Aorta (tissue), 5 donors: ENCODE measurements at regions of chr3 and their contacts with region 1.

Region 1: GRCh38 chr3:130892759-130893375 is 1.0 kb upstream of the ATP2C1 start:
- DNase-seq: peak in 1 of 2 donors; percentile 68
- ATAC-seq: peak; percentile 90
- H3K4me3 ChIP-seq: peak overlapping the region; percentile 70 to 95
- H3K27ac ChIP-seq: peak overlapping the region; percentile 93
- H3K4me1 ChIP-seq: peaks cover 3 to 5% of the 10 kb centered on the region in 2 donors
- H3K27me3 ChIP-seq: no peaks in the 10 kb centered on the region

Region 2: DNA sequence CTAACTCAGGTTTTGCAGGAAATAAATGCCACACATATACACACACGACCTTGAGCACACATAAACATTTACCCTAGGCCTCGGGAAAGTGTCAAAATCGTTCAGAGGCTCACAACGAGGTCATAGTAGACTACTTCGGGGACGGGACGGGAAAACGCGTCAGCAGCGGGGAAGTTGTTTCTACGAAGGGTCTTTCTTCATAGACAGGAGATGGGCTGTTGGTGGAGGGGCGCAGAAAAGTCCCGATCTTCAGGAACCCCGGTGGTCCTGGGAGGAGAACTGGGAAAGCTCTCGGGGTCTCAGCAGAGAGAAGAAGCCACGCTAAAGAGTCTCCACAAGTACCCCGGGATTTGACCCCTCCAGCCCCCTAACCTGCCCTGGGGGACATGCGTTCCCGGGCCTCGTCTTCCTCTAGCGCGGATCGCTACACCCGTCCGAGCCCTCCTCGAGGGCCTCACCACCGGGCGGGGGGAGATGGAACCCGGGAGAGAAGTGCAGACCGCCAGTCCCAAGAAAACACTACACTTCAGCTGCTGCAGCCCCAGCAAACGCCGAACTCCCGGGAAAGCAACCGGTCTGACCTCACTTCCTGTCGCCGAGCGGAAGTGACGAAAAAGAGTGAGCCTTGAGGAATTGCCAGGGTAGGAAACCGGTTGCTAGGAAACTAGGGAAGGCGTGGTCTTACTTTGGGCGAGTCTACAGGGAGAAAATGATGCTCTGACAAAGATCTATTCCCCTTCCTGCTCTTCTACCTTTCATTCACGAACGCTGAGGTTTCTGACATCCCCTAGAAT is 146.4 kb before region 1 on chr3 and contains the start of gene PIK3R4:
- intact Hi-C with region 1: loop called in 1 of 2 experiments (anchors 5 kb)
- DNase-seq: peak; percentile 95 to 96
- ATAC-seq: peak; percentile 96
- H3K4me3 ChIP-seq: peak within 1 kb of the TSS; percentile 51 to 91
- H3K27ac ChIP-seq: peak within 1 kb of the TSS in 1 of 2 donors; percentile 75
- H3K4me1 ChIP-seq: peaks cover 6 to 8% of the 10 kb centered on the region in 2 donors
- H3K27me3 ChIP-seq: no peaks in the 10 kb centered on the region
- total RNA-seq, gene PIK3R4: 20.5 to 22.3 TPM

Region 3: GRCh38 chr3:130759699-130760338 is 133.0 kb before region 1 on chr3:
- intact Hi-C with region 1: loop called in 1 of 2 experiments (anchors 5 kb)
- DNase-seq: peak in 1 of 2 donors; percentile 53
- ATAC-seq: peak; percentile 69
- H3K4me3 ChIP-seq: no peak overlapping the region
- H3K27ac ChIP-seq: no peak overlapping the region
- H3K4me1 ChIP-seq: no peaks in the 10 kb centered on the region
- H3K27me3 ChIP-seq: no peaks in the 10 kb centered on the region

Region 4: DNA sequence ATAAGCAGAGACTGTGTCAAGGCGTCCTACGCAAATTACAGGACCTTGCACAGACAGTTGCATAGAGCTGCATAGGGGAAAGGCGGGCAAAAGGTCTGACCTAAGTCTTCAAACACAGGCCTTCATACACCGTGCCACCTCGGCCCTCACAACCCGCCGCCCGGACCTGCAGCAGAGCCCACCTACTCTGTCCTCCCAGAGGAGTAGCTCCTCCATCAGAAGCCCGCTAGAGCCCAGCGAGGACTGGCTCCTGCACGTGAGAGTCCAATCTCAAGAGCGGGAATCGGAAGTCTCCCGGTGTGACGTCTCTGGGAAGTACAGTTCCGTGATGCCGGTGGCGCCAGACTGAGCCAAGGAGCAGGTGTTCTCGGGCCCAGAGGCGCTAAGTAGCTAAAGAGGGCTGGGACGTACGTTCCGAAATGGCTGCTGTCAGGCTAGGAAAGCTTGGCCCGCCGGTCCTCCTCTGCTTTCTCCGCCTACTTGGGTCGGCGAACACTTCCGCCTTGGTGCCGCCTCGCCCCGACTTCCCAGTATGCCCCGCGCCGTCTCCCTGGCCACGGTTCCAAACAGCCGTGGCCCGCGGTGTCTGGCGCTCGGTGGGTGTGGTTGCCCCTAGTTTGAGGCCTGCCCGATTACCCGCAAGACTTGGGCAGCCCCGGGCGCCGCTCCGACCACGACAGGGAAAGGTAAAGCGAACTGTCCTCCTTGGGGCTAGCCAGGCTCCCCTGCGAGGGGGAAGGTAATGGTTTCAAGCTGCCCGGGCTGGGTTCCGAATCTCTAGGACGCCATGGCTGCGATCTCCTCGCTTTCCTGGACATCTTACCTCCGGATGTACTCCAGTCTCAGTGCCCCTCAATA is 133.7 kb after region 1 on chr3 and contains the starts of genes ASTE1 and NEK11:
- intact Hi-C with region 1: loop called in 1 of 2 experiments (anchors 10 kb)
- DNase-seq: peak; percentile 95 to 97
- ATAC-seq: peak; percentile 98
- H3K4me3 ChIP-seq: peak within 1 kb of the TSS; percentile 69 to 83
- H3K27ac ChIP-seq: peak within 1 kb of the TSS in 1 of 2 donors; percentile 56
- H3K4me1 ChIP-seq: peaks cover 4 to 6% of the 10 kb centered on the region in 2 donors
- H3K27me3 ChIP-seq: no peaks in the 10 kb centered on the region
- total RNA-seq, gene ASTE1: 4.3 to 8.0 TPM
- total RNA-seq, gene NEK11: 5.9 to 14.5 TPM